ENCODE measurements at regions of chr18 and their contacts with region 1.

Region 1: GRCh38 chr18:8870528-8870927 is 165.2 kb downstream of the MTCL1 start:
- DNase-seq: peak in 6 of 10 donors; percentile 21 to 63 (median 51)
- H3K4me3 ChIP-seq: no peak overlapping the region
- H3K27ac ChIP-seq: peak overlapping the region in 17 of 59 donors; percentile 7 to 77 (median 61)
- H3K27me3 ChIP-seq: no peaks in the 10 kb centered on the region
- CTCF ChIP-seq: no peak

Region 2: GRCh38 chr18:8816816-8817215 is 53.7 kb before region 1 on chr18:
- intact Hi-C with region 1: loop called in 1 of 2 experiments (anchors 2 kb)
- DNase-seq: peak in 1 of 10 donors; percentile 41
- H3K4me3 ChIP-seq: no peak overlapping the region
- H3K27ac ChIP-seq: peak overlapping the region in 31 of 59 donors; percentile 0 to 78 (median 56)
- H3K27me3 ChIP-seq: no peaks in the 10 kb centered on the region
- CTCF ChIP-seq: no peak

Region 3: GRCh38 chr18:8948471-8949149 is 78.1 kb after region 1 on chr18:
- intact Hi-C with region 1: loop called in 1 of 2 experiments (anchors 2 kb)
- DNase-seq: peak in 1 of 10 donors; percentile 69
- H3K4me3 ChIP-seq: no peak overlapping the region
- H3K27ac ChIP-seq: peak overlapping the region in 45 of 59 donors; percentile 3 to 91 (median 59)
- H3K27me3 ChIP-seq: no peaks in the 10 kb centered on the region
- CTCF ChIP-seq: no peak

Region 4: GRCh38 chr18:8978394-8978793 is 107.9 kb after region 1 on chr18:
- intact Hi-C with region 1: loop called in 1 of 2 experiments (anchors 5 kb)
- DNase-seq: no peak
- H3K4me3 ChIP-seq: no peak overlapping the region
- H3K27ac ChIP-seq: peak overlapping the region in 53 of 59 donors; percentile 5 to 90 (median 67)
- H3K27me3 ChIP-seq: no peaks in the 10 kb centered on the region
- CTCF ChIP-seq: no peak